Calu3 (cell line): ENCODE measurements at regions of chr7 and their contacts with region 1.

Region 1: GRCh38 chr7:46486256-46487206 is 565.5 kb upstream of the IGFBP3 start:
- DNase-seq: peak; percentile 60
- H3K4me3 Mint-ChIP-seq: peak overlapping the region; percentile 19
- H3K27ac Mint-ChIP-seq: peak overlapping the region; percentile 83
- H3K4me1 Mint-ChIP-seq: peaks cover 50% of the 10 kb centered on the region
- H3K27me3 Mint-ChIP-seq: no peaks in the 10 kb centered on the region
- CTCF ChIP-seq: no peak

Region 2: DNA sequence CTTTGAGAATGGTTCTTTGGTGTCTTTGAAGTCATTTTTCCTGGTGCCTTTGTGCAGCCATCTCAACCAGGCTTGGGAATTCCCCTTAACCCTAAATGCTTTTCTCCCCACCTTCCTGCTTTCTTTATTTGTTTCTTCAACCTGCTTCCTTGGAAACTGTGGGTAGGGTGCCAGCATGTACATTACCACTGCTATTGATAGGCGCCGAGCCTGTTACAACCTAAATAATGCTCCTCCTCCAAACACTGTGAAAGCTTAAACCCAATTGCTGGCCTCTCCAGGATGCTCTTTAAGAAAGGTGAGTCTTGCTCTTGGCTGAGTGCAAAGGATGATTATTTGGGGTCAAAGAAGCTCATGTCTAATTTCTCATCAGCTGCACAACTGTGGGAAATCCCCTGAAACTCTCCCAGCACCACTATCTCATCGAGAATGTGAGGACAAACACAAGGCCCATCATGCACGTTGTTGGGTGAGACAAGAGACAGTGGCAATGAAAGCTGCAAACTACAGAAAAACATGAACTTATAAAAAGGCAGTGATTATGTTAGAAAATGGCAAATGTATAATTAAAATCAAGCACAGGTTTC is 280.0 kb before region 1 on chr7:
- CTCF ChIA-PET with region 1: no interaction called
- intact Hi-C with region 1: loop called (anchors 5 kb)
- DNase-seq: peak; percentile 80
- H3K4me3 Mint-ChIP-seq: peak overlapping the region; percentile 19
- H3K27ac Mint-ChIP-seq: peak overlapping the region; percentile 97
- H3K4me1 Mint-ChIP-seq: peaks cover 70% of the 10 kb centered on the region
- H3K27me3 Mint-ChIP-seq: no peaks in the 10 kb centered on the region
- CTCF ChIP-seq: no peak

Region 3: GRCh38 chr7:46363688-46364303 is 122.7 kb before region 1 on chr7:
- CTCF ChIA-PET with region 1: no interaction called
- intact Hi-C with region 1: loop called (anchors 5 kb)
- DNase-seq: no peak
- H3K4me3 Mint-ChIP-seq: no peak overlapping the region
- H3K27ac Mint-ChIP-seq: no peak overlapping the region
- H3K4me1 Mint-ChIP-seq: peaks cover 19% of the 10 kb centered on the region
- H3K27me3 Mint-ChIP-seq: no peaks in the 10 kb centered on the region
- CTCF ChIP-seq: peak; percentile 29

Region 4: GRCh38 chr7:46385662-46386309 is 100.7 kb before region 1 on chr7:
- CTCF ChIA-PET with region 1: no interaction called
- intact Hi-C with region 1: loop called (anchors 5 kb)
- DNase-seq: no peak
- H3K4me3 Mint-ChIP-seq: no peak overlapping the region
- H3K27ac Mint-ChIP-seq: peak overlapping the region; percentile 65
- H3K4me1 Mint-ChIP-seq: peaks cover 28% of the 10 kb centered on the region
- H3K27me3 Mint-ChIP-seq: no peaks in the 10 kb centered on the region
- CTCF ChIP-seq: no peak

Region 5: GRCh38 chr7:46512891-46513645 is 26.5 kb after region 1 on chr7:
- CTCF ChIA-PET with region 1: interaction called, 4 read pairs
- intact Hi-C with region 1: loop called (anchors 2 kb)
- DNase-seq: peak; percentile 45
- H3K4me3 Mint-ChIP-seq: no peak overlapping the region
- H3K27ac Mint-ChIP-seq: peak overlapping the region; percentile 38
- H3K4me1 Mint-ChIP-seq: peaks cover 50% of the 10 kb centered on the region
- H3K27me3 Mint-ChIP-seq: no peaks in the 10 kb centered on the region
- CTCF ChIP-seq: no peak

Region 6: DNA sequence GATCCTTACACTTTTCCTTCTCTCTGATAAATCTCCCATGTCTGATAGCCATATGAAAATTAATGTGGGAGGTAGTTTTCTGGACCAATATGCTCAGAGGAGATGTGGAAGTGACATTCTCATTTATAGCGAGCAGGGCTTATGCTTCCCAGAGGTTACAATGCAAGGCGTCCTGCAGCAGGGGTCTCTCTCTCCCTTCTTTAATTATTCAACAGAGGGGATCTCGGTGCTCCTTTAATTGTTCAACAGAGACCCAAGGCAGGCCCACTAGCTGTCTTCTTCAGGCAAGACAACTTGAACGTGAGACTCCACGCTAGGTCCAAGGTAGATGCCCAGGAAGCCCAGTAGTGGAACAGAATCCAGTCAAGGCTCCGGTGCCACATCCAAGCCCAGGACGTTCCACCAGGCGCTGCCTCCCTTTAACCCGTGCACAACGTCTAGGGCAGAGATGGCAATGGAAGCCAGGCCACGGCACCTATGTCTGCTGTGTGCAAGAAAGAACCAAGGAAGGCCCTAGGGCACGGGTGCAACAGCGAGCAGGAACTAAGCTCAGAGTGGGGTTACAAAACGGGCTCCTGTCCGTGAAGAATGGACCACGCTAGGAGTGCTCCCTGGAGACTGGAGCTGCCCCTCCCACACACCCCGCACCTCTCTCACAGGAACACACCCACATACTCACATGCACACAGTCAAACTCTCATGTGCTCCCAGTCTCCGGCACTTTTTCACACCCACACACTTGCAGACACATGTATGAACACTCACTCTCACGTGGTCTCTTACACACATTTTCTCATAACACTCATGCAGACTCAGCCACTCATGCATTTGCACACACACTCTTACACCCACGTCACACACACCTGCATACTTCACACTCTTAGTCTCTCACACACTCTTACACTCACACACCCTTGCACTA is 865.0 kb after region 1 on chr7:
- CTCF ChIA-PET with region 1: no interaction called
- intact Hi-C with region 1: no loop called
- DNase-seq: no peak
- H3K4me3 Mint-ChIP-seq: no peak overlapping the region
- H3K27ac Mint-ChIP-seq: no peak overlapping the region
- H3K4me1 Mint-ChIP-seq: no peaks in the 10 kb centered on the region
- H3K27me3 Mint-ChIP-seq: no peaks in the 10 kb centered on the region
- CTCF ChIP-seq: no peak